ENCODE measurements at regions of chr9 and their contacts with region 1.

Region 1: DNA sequence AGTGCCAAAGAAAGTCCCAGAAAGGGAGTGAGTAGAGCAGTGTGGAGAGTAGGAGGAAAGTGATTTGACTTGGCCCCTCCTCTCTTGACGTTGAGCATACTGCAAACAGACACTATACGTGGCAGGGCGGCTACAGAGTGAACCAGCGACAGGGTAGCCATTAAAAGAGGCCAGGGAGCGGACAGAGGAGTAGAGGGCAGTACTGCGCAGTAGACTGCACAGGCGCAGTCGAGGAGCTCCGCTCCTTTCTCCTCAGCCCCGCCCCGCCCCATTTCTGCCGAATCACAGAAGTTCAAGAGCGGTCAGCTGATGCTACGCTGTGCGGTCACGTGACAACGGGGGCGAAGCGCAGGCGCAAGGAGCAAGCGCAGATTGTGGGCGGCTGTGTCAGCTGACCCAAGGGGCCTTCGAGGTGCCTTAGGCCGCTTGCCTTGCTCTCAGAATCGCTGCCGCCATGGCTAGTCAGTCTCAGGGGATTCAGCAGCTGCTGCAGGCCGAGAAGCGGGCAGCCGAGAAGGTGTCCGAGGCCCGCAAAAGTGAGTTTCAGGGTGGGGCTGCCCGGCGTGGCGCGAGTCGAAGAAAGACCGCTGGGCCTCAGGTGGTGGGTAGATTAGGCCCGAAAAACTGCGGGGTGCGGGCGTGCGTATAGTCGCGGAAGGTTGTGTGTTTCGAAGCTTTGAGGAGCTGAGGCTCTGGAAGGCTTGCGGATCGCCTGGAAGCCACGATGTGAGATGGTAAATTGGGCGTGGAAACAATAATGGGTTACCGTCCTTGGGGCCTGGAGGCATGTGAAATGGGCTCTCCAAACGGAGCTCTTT is at the start of gene ATP6V1G1:
- DNase-seq: peak; percentile 100
- ATAC-seq: peak; percentile 96
- H3K4me3 Mint-ChIP-seq: peak within 1 kb of the TSS; percentile 100
- H3K27ac Mint-ChIP-seq: peak within 1 kb of the TSS; percentile 98
- H3K4me1 Mint-ChIP-seq: peaks cover 45% of the 10 kb centered on the region
- H3K27me3 Mint-ChIP-seq: peaks cover 4% of the 10 kb centered on the region
- total RNA-seq, gene ATP6V1G1: 79.2 to 82.0 TPM

Region 2: GRCh38 chr9:114405294-114406034 is 182.1 kb before region 1 on chr9:
- CTCF ChIA-PET with region 1: interaction called, 38 read pairs
- POLR2A ChIA-PET with region 1: interaction called, 4 read pairs
- DNase-seq: peak; percentile 90
- ATAC-seq: peak; percentile 98
- H3K4me3 Mint-ChIP-seq: no peak overlapping the region
- H3K27ac Mint-ChIP-seq: peak overlapping the region; percentile 62
- H3K4me1 Mint-ChIP-seq: peaks cover 14% of the 10 kb centered on the region
- H3K27me3 Mint-ChIP-seq: peaks cover 1% of the 10 kb centered on the region

Region 3: GRCh38 chr9:114505187-114506081 is 82.2 kb before region 1 on chr9 and contains the start of gene WHRN:
- CTCF ChIA-PET with region 1: interaction called, 10 read pairs
- POLR2A ChIA-PET with region 1: interaction called, 5 read pairs
- DNase-seq: peak; percentile 91
- ATAC-seq: peak; percentile 84
- H3K4me3 Mint-ChIP-seq: peak within 1 kb of the TSS; percentile 75
- H3K27ac Mint-ChIP-seq: peak within 1 kb of the TSS; percentile 56
- H3K4me1 Mint-ChIP-seq: peaks cover 25% of the 10 kb centered on the region
- H3K27me3 Mint-ChIP-seq: peaks cover 63% of the 10 kb centered on the region
- total RNA-seq, gene WHRN: 2.6 to 4.1 TPM

Region 4: DNA sequence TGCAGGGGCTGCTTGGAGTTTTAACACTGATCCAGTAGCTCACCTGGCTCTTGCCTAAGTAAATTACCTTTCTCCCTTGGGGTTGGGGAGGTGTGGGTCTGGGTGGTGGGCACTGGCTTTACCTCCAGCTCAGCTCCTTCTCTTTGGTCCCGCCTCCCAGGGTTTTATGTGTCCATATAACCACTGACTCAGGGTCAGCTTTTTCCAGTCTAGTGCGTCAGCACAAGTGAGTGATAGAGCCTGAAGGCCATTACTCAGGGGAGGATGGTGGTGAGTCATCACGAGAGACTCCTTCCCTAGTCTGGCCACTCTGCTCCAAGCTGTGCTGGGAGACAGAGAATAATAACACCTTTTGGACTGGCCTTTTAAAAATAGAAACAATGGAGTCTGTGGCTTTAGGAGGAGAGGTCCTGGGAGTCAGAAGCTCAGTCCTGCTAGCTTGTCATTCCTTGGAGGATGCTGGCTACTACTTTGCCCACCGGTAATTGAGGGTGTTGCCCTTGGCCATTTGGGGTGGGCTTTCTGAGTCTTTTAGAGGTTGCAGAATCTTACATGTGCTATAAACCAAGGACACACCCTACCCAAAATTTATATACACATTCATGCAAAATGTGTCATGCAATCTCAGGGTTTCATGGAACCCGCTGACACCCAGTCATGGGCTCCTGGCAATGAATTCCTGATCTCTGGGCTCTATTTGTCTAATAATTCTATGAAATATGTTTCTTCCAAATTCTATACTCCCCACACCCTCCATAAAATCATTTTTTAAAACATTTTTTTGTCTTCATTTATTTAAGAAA is 35.5 kb before region 1 on chr9:
- CTCF ChIA-PET with region 1: no interaction called
- POLR2A ChIA-PET with region 1: no interaction called
- DNase-seq: no peak
- ATAC-seq: no peak
- H3K4me3 Mint-ChIP-seq: no peak overlapping the region
- H3K27ac Mint-ChIP-seq: no peak overlapping the region
- H3K4me1 Mint-ChIP-seq: no peaks in the 10 kb centered on the region
- H3K27me3 Mint-ChIP-seq: peaks cover 17% of the 10 kb centered on the region

Region 5: GRCh38 chr9:114611516-114612271 is 24.1 kb after region 1 on chr9:
- CTCF ChIA-PET with region 1: interaction called, 59 read pairs
- POLR2A ChIA-PET with region 1: interaction called, 34 read pairs
- DNase-seq: peak; percentile 47
- ATAC-seq: peak; percentile 69
- H3K4me3 Mint-ChIP-seq: peak overlapping the region; percentile 83
- H3K27ac Mint-ChIP-seq: peak overlapping the region; percentile 88
- H3K4me1 Mint-ChIP-seq: peaks cover 44% of the 10 kb centered on the region
- H3K27me3 Mint-ChIP-seq: no peaks in the 10 kb centered on the region

Region 6: GRCh38 chr9:114641967-114642366 is 54.4 kb after region 1 on chr9:
- CTCF ChIA-PET with region 1: interaction called, 10 read pairs
- POLR2A ChIA-PET with region 1: no interaction called
- DNase-seq: no peak
- ATAC-seq: no peak
- H3K4me3 Mint-ChIP-seq: no peak overlapping the region
- H3K27ac Mint-ChIP-seq: no peak overlapping the region
- H3K4me1 Mint-ChIP-seq: peaks cover 4% of the 10 kb centered on the region
- H3K27me3 Mint-ChIP-seq: no peaks in the 10 kb centered on the region

Region 7: DNA sequence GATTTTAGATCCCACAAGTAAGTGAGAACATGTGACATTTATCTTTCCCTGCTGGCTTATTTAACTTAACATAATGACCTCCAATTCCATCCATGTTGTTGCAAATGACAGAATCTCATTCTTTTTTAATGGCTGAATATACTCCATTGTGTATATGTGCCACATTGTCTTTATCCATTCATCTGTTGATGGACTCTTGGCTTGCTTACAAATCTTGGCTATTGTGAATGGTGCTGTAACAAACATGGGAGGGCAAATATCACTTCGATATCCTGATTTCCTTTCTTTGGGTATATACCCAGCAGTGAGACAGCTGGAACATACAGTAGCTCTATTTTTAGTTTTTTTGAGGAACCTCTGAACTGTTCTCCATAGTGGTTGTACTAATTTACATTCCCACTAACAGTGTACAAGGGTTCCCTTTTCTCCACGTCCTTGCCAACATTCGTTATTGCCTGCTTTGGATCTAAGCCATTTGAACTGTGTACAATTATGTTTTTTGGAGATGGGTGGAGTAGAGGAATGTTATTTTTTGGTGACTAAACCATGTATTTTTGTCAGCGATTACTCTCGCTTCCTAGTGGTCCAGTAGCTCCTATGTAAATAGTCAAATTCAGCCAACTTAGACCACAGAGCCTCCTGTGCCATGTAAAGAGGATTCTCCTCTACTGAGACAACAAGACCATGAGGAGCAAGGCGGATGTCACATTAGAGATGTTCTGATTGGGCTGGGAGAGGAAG is 157.7 kb after region 1 on chr9:
- CTCF ChIA-PET with region 1: no interaction called
- POLR2A ChIA-PET with region 1: no interaction called
- DNase-seq: no peak
- ATAC-seq: no peak
- H3K4me3 Mint-ChIP-seq: no peak overlapping the region
- H3K27ac Mint-ChIP-seq: peak overlapping the region; percentile 58
- H3K4me1 Mint-ChIP-seq: peaks cover 24% of the 10 kb centered on the region
- H3K27me3 Mint-ChIP-seq: no peaks in the 10 kb centered on the region

Measured in activated CD8-positive, alpha-beta T cell treated with anti-CD3 and anti-CD28 coated beads, Interleukin-2, amount 10 ng/mL, durations not matched to agents 7 days and 5 days (primary cell).